GM12878 (cell line): ENCODE measurements at regions of chr15 and their contacts with region 1.

Region 1: GRCh38 chr15:72155635-72156616 is 37.7 kb downstream of the SENP8 start:
- DNase-seq: peak; percentile 62
- ATAC-seq: peak; percentile 99
- H3K4me3 ChIP-seq: peak overlapping the region; percentile 59
- H3K27ac ChIP-seq: peak overlapping the region; percentile 67; the same call in 1 of the 2 replicates
- H3K4me1 ChIP-seq: no peaks in the 10 kb centered on the region
- H3K27me3 ChIP-seq: no peaks in the 10 kb centered on the region
- CTCF ChIP-seq: peak; percentile 88 to 96 (median 94)
- EP300 ChIP-seq: no peak
- POLR2A ChIP-seq: no peak
- RAD21 ChIP-seq: peak; percentile 99

Region 2: GRCh38 chr15:71743861-71744382 is 412.0 kb before region 1 on chr15:
- CTCF ChIA-PET with region 1: interaction called, 57 read pairs
- POLR2A ChIA-PET with region 1: no interaction called
- RAD21 ChIA-PET with region 1: interaction called, 33 read pairs
- SMC1A ChIA-PET with region 1: interaction called, 49 read pairs
- in situ Hi-C with region 1: loop called (anchors 5 kb)
- intact Hi-C with region 1: loop called (anchors 2 kb)
- DNase-seq: no peak
- ATAC-seq: peak; percentile 65
- H3K4me3 ChIP-seq: no peak overlapping the region
- H3K27ac ChIP-seq: no peak overlapping the region
- H3K4me1 ChIP-seq: no peaks in the 10 kb centered on the region
- H3K27me3 ChIP-seq: peaks cover 1 to 5% of the 10 kb centered on the region in 2 experiments; a peak in 3 of 4 replicates
- CTCF ChIP-seq: peak; percentile 60 to 75 (median 61)
- EP300 ChIP-seq: no peak
- POLR2A ChIP-seq: no peak
- RAD21 ChIP-seq: peak; percentile 74

Region 3: DNA sequence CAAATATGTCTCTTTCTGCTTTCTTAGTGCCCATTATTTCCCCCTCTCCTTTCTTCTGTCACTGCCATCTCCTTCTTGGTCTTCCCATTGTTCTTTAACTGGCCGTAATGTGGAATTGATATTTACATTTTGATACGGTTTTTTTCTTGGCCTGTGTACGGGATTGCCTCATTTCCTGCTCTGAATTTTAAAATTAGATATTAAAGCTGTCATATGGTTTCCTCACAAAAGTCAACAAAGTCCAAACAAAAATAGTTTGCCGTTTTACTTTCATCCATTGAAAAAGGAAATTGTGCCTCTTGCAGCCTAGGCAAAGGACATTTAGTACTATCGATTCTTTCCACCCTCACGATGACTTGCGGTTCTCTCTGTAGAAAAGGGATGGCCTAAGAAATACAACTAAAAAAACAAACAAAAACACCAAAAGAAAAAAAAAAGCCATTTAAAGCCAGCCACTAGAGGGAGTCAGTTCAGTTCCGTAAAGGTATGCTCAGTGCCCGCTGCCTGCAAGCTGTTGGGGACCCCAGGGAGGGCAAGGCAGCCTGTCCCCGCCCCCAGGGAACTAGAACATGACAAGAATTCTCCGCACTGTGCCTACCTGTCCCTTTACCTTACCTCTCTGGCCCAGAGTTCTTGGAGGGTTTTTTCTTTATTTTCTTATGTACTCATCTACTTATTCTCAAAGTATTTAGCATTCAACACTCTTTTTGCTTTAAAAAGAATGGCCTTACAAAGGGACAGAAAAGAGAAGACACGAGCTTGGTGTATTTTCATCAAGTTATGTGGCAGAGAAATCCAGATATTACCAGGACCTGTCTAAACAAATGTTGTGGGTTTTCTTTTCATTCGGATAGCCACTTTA is 375.6 kb before region 1 on chr15:
- CTCF ChIA-PET with region 1: interaction called, 46 read pairs
- POLR2A ChIA-PET with region 1: no interaction called
- RAD21 ChIA-PET with region 1: interaction called, 6 read pairs
- SMC1A ChIA-PET with region 1: interaction called, 24 read pairs
- in situ Hi-C with region 1: no loop called
- intact Hi-C with region 1: loop called (anchors 1 kb)
- DNase-seq: peak; percentile 49
- ATAC-seq: peak; percentile 86
- H3K4me3 ChIP-seq: 0 out of 2 replicates have a peak overlapping the region, but pooled peaks have one; percentile 19
- H3K27ac ChIP-seq: peak overlapping the region; percentile 40; the same call in 1 of the 2 replicates
- H3K4me1 ChIP-seq: peaks cover 18% of the 10 kb centered on the region
- H3K27me3 ChIP-seq: no peaks in the 10 kb centered on the region
- CTCF ChIP-seq: peak; percentile 68 to 84 (median 74)
- EP300 ChIP-seq: no peak
- POLR2A ChIP-seq: no peak
- RAD21 ChIP-seq: peak; percentile 47

Region 4: DNA sequence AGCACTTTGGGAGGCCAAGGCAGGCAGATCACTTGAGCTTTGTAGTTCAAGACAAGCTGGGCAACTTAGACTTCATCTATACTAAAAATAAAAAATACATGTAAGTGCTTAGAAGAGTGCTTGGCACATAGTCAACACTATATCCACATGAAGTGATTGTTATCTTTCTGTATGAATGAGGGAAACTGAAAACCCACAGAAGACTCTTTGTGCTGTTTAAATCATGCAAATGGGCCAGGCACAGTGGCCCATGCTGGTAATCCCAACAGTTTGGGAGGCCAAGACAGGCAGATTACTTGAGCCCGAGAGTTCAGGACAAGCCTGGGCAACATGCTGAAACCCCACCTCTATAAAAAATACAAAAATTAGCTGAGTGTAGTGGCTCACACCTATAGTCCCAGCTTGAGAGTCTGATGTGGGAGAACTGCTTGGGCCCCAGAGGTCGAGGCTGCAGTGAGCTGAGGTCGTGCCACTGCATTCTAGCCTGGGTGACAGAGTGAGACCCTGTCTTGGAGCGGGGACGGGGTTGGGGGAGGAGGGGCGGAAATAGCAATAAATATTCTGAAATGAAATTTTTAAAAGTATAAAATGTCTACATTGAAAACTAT is 215.8 kb before region 1 on chr15:
- CTCF ChIA-PET with region 1: no interaction called
- POLR2A ChIA-PET with region 1: no interaction called
- RAD21 ChIA-PET with region 1: no interaction called
- SMC1A ChIA-PET with region 1: no interaction called
- in situ Hi-C with region 1: no loop called
- intact Hi-C with region 1: loop called (anchors 10 kb)
- DNase-seq: peak; percentile 60
- ATAC-seq: peak; percentile 74
- H3K4me3 ChIP-seq: no peak overlapping the region
- H3K27ac ChIP-seq: no peak overlapping the region
- H3K4me1 ChIP-seq: no peaks in the 10 kb centered on the region
- H3K27me3 ChIP-seq: no peaks in the 10 kb centered on the region
- CTCF ChIP-seq: no peak
- EP300 ChIP-seq: no peak
- POLR2A ChIP-seq: no peak
- RAD21 ChIP-seq: no peak

Region 5: GRCh38 chr15:72112116-72112515 is 43.8 kb before region 1 on chr15:
- CTCF ChIA-PET with region 1: interaction called, 13 read pairs
- POLR2A ChIA-PET with region 1: interaction called, 5 read pairs
- RAD21 ChIA-PET with region 1: interaction called, 9 read pairs
- SMC1A ChIA-PET with region 1: interaction called, 5 read pairs
- in situ Hi-C with region 1: no loop called
- intact Hi-C with region 1: no loop called
- DNase-seq: no peak
- ATAC-seq: no peak
- H3K4me3 ChIP-seq: no peak overlapping the region
- H3K27ac ChIP-seq: no peak overlapping the region
- H3K4me1 ChIP-seq: peaks cover 4% of the 10 kb centered on the region; the same call in 1 of the 2 replicates
- H3K27me3 ChIP-seq: no peaks in the 10 kb centered on the region
- CTCF ChIP-seq: no peak
- EP300 ChIP-seq: no peak
- POLR2A ChIP-seq: no peak
- RAD21 ChIP-seq: no peak

Region 6: DNA sequence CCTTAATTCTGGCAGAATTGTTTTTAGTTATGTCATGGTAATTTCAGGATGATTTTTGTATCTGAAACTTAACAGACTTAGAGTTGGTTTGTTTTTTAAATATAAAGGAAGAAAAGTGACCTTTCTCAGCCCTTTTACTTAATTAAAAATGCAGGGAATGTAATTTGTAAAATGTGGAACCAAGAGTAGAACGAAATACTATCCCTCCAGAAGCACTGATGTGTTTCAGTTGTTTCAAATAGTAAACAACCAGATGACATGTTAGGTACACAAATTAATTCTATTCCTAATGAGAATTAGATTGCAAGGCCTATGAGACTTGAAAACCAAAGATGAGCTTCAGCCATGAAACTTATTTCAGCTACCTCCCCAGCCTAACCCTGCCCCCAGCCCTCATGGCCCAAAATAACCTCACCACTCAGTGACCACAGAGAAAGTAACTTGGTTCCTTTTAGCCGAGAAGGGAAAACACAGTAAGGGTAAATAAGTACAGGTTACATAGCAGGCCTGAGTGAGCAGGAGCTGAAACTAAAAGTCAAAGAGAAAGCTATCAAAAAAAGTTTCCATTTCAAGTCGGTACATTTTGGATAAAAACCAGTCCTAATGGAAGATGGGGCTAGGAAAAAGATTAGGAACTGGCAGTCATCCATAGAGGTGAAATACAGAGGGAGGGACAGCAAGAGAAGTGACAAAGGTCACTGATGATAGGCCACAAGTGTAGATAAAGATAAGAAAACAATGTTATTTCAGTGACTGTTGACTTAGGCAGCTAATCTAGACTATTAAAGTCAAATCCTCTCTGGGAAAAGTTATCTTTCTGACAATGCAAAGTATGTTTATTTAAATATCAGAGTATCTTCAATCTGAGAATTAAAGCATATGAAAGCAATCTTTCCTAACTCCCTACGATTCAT is 14.5 kb before region 1 on chr15:
- CTCF ChIA-PET with region 1: interaction called, 15 read pairs
- POLR2A ChIA-PET with region 1: interaction called, 4 read pairs
- RAD21 ChIA-PET with region 1: interaction called, 7 read pairs
- SMC1A ChIA-PET with region 1: interaction called, 20 read pairs
- in situ Hi-C with region 1: no loop called
- intact Hi-C with region 1: no loop called
- DNase-seq: peak; percentile 87
- ATAC-seq: peak; percentile 100
- H3K4me3 ChIP-seq: peak overlapping the region; percentile 34; the same call in 1 of the 2 replicates
- H3K27ac ChIP-seq: peak overlapping the region; percentile 93
- H3K4me1 ChIP-seq: peaks cover 20% of the 10 kb centered on the region
- H3K27me3 ChIP-seq: no peaks in the 10 kb centered on the region
- CTCF ChIP-seq: no peak
- EP300 ChIP-seq: peak; percentile 81 to 84
- POLR2A ChIP-seq: no peak
- RAD21 ChIP-seq: peak; percentile 40; the same call in 1 of the 2 replicates

Region 7: DNA sequence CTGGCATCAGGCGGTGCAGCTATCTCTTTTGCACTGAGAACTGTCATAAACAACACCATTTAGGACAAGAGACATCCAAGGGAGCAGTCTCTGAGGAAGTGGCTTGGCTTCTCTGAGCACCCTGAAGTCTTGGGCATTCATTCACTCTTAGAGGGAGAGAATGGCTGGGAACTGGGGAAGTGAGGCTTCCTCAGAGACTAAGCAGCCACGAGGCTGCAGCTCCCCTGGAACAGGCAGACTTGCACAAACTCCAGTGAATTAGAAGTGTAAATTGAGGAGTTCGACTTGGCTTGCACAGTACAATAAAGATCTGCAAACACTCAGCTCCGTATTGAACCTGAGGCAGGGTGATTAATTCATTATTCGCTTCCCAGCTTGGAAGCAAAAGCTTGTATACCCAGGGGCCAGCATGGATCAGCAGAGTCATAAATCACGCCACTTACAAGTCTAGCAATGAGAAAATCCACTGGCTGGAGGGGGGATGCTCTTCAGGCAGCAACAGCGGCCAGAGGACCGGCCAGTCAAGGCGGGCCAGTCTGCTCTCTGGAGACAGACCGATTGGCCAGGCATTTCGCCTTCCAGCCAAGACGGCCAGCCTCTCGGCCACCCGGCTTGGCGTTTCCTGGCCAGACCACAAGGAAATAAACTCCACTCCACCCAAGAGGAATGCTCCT is 746.5 kb after region 1 on chr15:
- CTCF ChIA-PET with region 1: no interaction called
- POLR2A ChIA-PET with region 1: no interaction called
- RAD21 ChIA-PET with region 1: no interaction called
- SMC1A ChIA-PET with region 1: no interaction called
- in situ Hi-C with region 1: no loop called
- intact Hi-C with region 1: no loop called
- DNase-seq: no peak
- ATAC-seq: no peak
- H3K4me3 ChIP-seq: no peak overlapping the region
- H3K27ac ChIP-seq: no peak overlapping the region
- H3K4me1 ChIP-seq: no peaks in the 10 kb centered on the region
- H3K27me3 ChIP-seq: peaks cover 0 to 5% of the 10 kb centered on the region in 2 experiments; a peak in 1 of 4 replicates
- CTCF ChIP-seq: no peak
- EP300 ChIP-seq: no peak
- POLR2A ChIP-seq: no peak
- RAD21 ChIP-seq: no peak